HEK293 (cell line): ENCODE measurements at regions of chr7 and their contacts with region 1.

Region 1: GRCh38 chr7:148704189-148704588 is 5.5 kb downstream of the CUL1 start:
- H3K4me3 ChIP-seq: no peak overlapping the region
- H3K27ac ChIP-seq: no peak overlapping the region
- H3K4me1 ChIP-seq: peaks cover 21% of the 10 kb centered on the region
- CTCF ChIP-seq: no peak

Region 2: GRCh38 chr7:148687555-148687954 is 16.6 kb before region 1 on chr7:
- CTCF ChIA-PET with region 1: no interaction called
- POLR2A ChIA-PET with region 1: no interaction called
- H3K4me3 ChIP-seq: no peak overlapping the region
- H3K27ac ChIP-seq: no peak overlapping the region
- H3K4me1 ChIP-seq: no peaks in the 10 kb centered on the region
- CTCF ChIP-seq: no peak

Region 3: DNA sequence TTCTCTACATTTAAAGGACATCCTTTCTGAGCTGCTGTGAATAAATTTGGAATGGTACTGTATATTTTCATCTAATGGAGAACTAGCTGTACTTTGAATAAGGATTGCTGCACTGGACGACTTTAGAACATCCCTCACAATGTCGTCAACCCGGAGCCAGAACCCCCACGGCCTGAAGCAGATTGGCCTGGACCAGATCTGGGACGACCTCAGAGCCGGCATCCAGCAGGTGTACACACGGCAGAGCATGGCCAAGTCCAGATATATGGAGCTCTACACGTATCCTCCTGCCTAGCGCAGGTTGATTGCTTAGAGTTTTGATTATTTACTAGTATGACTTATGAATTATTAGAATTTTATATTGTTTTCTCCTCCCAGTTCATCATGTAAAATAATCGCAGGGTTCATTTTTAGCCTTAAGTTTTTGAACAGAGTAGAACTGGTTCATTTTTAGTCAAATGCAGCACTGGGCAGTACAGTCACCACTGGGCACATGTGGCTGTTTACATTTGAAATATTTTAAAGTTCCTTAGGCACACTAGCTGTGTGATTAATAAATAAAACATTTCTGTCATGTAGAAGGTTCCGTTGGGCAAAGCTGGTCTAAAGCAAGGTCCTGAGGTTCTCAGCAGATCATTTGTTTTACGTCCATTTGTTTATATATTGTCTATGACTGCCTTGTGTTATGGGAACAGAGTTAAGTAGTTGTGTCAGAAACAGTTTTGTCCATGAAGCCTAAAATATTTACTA is 26.0 kb after region 1 on chr7:
- CTCF ChIA-PET with region 1: interaction called, 10 read pairs
- POLR2A ChIA-PET with region 1: interaction called, 3 read pairs
- H3K4me3 ChIP-seq: no peak overlapping the region
- H3K27ac ChIP-seq: no peak overlapping the region
- H3K4me1 ChIP-seq: no peaks in the 10 kb centered on the region
- CTCF ChIP-seq: no peak